ENCODE measurements at regions of chr14 and their contacts with region 1.

Region 1: DNA sequence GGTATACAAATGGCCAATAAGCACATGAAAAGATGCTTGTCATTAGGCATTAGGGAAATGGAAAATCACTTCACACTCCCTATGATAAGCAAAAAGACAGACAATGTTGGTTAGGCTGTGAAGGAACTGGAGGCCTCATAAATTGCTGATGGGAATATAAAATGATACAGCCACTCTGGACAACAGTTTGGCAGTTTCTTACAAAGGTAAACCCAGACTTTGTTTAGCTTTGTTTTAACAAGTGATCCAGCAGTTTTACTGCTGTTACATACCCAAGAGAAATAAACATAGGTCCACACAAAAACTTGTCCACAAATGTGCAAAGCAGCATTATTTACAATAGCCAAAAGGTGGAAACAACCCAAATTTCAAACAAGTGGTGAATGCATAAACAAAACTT is 5.4 kb downstream of the RPS6KA5 start:
- DNase-seq: no peak
- ATAC-seq: no peak
- H3K4me3 ChIP-seq: no peak overlapping the region
- H3K27ac ChIP-seq: no peak overlapping the region
- H3K4me1 ChIP-seq: no peaks in the 10 kb centered on the region
- H3K27me3 ChIP-seq: no peaks in the 10 kb centered on the region

Region 2: GRCh38 chr14:90839024-90839888 is 215.8 kb before region 1 on chr14:
- intact Hi-C with region 1: no loop called
- DNase-seq: peak in 1 of 2 donors; percentile 82
- ATAC-seq: peak; percentile 91
- H3K4me3 ChIP-seq: no peak overlapping the region
- H3K27ac ChIP-seq: peak overlapping the region in 1 of 2 donors; percentile 72
- H3K4me1 ChIP-seq: no peaks in the 10 kb centered on the region
- H3K27me3 ChIP-seq: no peaks in the 10 kb centered on the region

Region 3: DNA sequence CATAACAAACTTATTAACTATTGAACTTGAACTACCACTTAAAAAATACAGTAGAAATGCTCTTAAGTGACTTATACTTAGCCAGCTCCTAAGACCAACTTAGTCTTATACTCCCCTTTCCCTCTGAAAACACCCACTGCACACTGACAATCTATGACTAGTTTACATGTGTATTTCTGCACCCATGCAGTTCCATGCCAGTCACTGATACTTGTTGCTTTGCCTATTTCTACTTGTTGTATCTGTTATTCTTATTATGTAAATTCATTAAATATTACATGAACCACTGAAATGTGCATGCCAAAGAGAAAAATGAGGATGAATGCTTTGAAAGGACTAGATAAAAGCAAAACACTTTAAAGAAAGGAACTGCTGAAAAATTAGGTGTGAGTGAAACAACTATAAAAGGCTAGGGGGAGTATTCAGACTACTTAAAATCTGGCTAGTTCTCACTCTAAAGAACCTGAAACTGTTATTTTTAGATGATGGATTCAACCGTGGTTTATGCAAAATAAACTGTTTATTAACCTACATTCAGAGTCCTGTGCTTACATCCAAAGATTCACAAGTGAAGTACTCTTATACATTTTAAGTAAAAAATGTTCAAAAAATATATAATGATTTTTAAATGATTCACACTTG is 69.3 kb before region 1 on chr14:
- intact Hi-C with region 1: loop called in 1 of 2 experiments (anchors 2 kb)
- DNase-seq: no peak
- ATAC-seq: no peak
- H3K4me3 ChIP-seq: no peak overlapping the region
- H3K27ac ChIP-seq: no peak overlapping the region
- H3K4me1 ChIP-seq: no peaks in the 10 kb centered on the region
- H3K27me3 ChIP-seq: no peaks in the 10 kb centered on the region